ENCODE measurements at regions of chr2 and their contacts with region 1.

Region 1: DNA sequence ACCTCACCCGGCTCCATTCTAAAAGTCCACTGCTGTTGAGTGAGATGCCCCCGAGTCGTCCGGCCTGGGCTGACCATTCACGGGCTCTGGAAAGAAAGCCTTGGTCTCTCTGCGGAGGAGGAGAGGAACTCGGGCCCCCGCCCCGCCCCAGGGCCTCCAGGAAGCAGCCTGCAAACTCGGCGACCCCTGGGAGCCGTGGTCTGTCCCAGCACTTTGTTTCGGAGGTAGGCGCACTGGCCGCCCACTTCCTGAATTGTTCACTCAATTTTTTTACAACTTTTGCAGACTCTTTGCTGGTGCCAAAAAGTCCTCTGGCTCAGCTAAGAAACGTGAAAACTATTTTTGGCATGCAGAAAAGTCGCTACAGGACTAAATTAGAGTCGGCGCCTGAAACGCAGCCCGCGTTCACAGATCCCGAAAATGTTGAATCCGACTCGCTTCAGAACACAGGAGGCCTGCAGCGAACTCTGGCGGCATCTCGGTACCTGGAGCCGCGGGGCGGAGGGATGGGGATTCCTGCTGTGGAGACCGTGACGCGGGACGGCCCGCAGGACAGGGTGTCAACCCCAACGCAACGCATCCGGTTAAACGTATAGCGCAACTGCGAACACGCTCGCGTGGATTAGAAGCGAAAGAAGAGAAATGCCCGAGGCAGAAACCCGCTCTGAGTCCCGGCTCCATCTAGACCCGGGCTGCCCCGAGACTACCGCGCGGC is 1.5 kb downstream of the PXDN start:
- DNase-seq: peak; percentile 77 to 94 (median 92)
- ATAC-seq: peak; percentile 64 to 72
- H3K4me3 ChIP-seq: peak overlapping the region; percentile 91
- H3K27ac ChIP-seq: peak overlapping the region; percentile 92
- H3K4me1 ChIP-seq: peaks cover 7% of the 10 kb centered on the region
- H3K27me3 ChIP-seq: no peaks in the 10 kb centered on the region

Region 2: DNA sequence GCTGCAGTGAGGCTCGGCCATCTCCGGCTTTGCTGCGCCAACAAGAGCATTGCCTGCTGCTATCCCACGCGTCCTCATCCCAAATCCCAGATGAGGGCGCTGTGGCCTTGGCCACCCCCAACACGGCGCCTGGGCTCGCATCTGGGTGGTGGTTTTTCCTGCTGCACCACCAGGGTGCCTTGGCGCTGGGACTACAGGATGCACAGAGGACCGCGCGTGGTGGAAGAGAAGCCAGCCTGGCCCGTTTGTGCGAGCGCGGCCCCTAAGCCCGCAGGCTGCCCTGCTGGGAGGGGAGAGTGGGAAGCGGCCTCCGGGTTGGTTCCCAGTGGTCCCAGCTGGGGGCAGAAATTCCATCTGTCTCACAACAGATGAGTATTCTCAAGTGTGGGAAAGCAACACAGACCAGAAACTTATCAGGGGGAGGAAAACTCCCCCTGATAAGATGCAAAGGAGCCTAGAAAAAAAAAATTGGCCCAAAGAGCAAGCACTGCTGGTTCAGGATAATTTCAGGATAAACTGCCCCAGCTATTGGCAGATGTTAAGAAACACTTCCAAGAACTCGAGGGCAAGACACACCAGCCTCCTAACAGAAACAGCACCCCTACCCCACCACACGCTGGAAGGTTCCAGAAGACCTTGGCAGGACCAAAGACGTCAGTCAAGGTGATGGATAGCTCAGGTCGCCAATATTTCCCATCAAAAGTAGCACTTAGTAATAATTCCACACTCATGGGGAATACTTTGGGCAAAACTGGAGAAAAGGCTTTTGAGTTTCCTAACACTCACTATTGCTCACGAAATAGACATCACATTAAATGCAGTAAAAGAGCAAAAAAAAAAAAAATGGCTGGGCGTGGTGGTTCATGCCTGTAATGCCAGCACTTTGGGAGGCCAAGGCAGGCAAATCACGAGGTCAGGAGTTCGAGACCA is 150.6 kb before region 1 on chr2:
- intact Hi-C with region 1: loop called in 1 of 4 experiments (anchors 5 kb)
- DNase-seq: peak; percentile 86 to 94 (median 93)
- ATAC-seq: peak; percentile 88 to 89
- H3K4me3 ChIP-seq: no peak overlapping the region
- H3K27ac ChIP-seq: peak overlapping the region; percentile 6
- H3K4me1 ChIP-seq: peaks cover 4% of the 10 kb centered on the region
- H3K27me3 ChIP-seq: no peaks in the 10 kb centered on the region

Region 3: GRCh38 chr2:1600191-1601082 is 142.4 kb before region 1 on chr2:
- intact Hi-C with region 1: loop called in 1 of 4 experiments (anchors 5 kb)
- DNase-seq: no peak
- ATAC-seq: no peak
- H3K4me3 ChIP-seq: no peak overlapping the region
- H3K27ac ChIP-seq: no peak overlapping the region
- H3K4me1 ChIP-seq: no peaks in the 10 kb centered on the region
- H3K27me3 ChIP-seq: no peaks in the 10 kb centered on the region

Region 4: DNA sequence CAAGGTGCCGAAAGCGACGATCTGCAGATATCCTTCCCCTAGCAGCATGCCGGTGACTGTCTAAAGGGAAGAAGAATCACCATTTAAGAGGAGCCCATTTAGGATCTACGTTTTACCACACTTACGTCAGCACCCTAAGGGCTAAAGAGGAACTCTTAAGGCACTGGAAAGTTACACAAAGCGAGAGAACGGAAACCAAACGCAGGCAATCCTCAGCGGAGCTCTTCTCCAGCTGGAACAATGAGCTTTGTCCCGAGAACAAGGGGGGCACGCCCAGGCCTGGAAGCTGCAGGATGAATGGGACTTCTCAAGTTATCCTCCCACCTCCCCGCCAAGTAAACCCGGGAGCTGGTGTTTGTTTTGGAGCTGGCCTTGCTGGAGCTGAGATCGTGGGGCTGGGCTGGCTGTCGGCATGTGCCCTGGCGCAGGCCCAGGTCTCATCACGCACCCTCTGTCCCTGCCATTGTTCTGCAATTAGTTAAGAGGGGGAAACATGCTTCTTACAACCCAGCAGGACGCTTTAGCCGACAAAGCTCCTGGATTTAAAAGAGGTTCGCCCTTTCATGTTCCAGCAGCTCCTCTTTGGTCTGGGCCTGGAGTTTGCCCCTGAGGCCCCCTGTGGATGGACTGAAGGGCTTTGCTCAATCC is 34.9 kb before region 1 on chr2:
- intact Hi-C with region 1: loop called in 1 of 4 experiments (anchors 5 kb)
- DNase-seq: peak; percentile 91 to 96 (median 93)
- ATAC-seq: peak; percentile 94 to 97
- H3K4me3 ChIP-seq: no peak overlapping the region
- H3K27ac ChIP-seq: peak overlapping the region; percentile 76
- H3K4me1 ChIP-seq: peaks cover 16% of the 10 kb centered on the region
- H3K27me3 ChIP-seq: no peaks in the 10 kb centered on the region

Measured in right cardiac atrium (tissue), 5 donors.